Activated CD4-positive, alpha-beta T cell treated with anti-CD3 and anti-CD28 coated beads, Interleukin-2, amount 10 ng/mL, durations not matched to agents 24 days and 14 days (primary cell): ENCODE measurements at regions of chr18 and their contacts with region 1.

Region 1: DNA sequence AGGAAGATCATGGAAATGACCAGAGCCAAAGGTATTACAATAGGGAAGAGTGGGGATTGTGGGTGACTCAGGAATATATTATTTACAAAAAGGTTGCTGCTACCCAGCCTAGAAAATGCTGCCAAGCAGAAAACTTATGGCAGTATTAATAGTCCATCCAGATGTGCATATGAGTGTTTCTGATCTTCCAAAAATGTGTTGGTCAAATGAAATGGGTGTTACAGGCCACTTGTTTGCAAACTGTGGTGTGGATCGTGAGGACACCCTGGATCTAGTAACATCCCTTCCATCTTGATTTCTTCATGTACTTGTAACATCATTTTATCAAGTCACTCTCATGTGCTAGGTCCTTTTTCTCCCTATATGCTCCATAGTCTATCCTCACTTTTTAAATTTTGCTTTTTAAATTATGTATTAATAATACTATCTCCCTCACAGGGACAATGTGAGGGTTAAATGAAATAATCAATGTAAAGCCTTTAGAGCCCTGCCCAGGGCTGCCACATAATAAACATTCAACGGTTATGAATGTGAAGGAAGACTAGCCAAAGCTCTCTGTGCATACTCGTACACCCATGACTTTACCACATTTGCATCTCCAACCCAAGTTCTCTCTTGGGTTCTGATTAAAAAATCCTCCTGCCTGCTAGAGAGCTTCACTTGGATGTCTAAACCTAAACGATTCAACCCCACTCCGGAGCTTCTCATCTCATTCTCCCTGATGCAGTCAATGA is 18.5 kb downstream of the CD226 start:
- DNase-seq: peak; percentile 49
- H3K4me3 Mint-ChIP-seq: no peak overlapping the region
- H3K27ac Mint-ChIP-seq: no peak overlapping the region
- H3K4me1 Mint-ChIP-seq: peaks cover 25% of the 10 kb centered on the region
- H3K27me3 Mint-ChIP-seq: no peaks in the 10 kb centered on the region

Region 2: GRCh38 chr18:69916412-69916811 is 12.8 kb before region 1 on chr18:
- intact Hi-C with region 1: loop called (anchors 1 kb)
- DNase-seq: no peak
- H3K4me3 Mint-ChIP-seq: no peak overlapping the region
- H3K27ac Mint-ChIP-seq: peak overlapping the region; percentile 9
- H3K4me1 Mint-ChIP-seq: peaks cover 49% of the 10 kb centered on the region
- H3K27me3 Mint-ChIP-seq: no peaks in the 10 kb centered on the region

Region 3: DNA sequence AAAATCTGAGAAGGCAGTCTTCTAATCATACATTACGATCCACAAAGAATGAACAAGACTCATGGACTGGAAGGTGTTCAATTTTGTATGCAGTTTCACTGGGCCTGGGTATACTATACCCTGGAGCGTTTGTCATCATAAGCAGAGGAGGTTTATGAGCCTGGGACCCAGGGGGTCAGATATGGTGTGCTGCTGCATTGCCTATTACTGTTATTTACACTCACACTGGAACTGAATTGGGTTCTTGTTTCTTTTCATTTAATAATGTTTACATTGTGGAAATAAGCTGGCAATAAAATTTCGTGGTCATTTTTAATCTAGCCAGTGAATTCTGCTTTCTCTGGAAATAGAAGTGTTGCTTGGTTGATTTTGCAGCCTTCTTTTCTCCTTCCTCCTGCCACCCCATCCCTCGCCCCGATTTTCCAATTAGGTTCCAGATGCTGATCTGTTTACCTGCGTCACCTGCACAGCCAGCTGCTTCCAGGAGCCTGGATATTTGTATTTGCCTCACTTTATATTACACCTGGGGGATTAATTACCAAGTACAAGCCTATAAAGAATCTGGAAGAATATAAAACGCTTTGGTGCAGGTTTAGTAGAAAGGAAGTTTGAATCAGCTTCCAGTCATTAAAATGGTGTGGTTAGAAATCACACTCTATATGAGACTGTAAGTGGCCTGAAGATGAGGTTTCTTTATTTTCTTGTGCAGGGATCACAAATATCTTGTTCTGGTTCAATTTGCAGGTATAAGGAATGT is 594.0 kb after region 1 on chr18:
- intact Hi-C with region 1: no loop called
- DNase-seq: no peak
- H3K4me3 Mint-ChIP-seq: no peak overlapping the region
- H3K27ac Mint-ChIP-seq: no peak overlapping the region
- H3K4me1 Mint-ChIP-seq: no peaks in the 10 kb centered on the region
- H3K27me3 Mint-ChIP-seq: no peaks in the 10 kb centered on the region